Activated T-helper 2 cell treated with anti-CD3 and anti-CD28 coated beads, Interferon-gamma antibody, Interleukin-2, Interleukin-4, amounts not matched to agents 10 μg/mL and 5 μg/mL and 100 μg/mL, durations not matched to agents 14 hours and 24 hours and 36 hours (primary cell): ENCODE measurements at regions of chr4 and their contacts with region 1.

Region 1: GRCh38 chr4:153573881-153574802 is 108.0 kb downstream of the TMEM131L start:
- DNase-seq: peak; percentile 55
- H3K4me3 Mint-ChIP-seq: no peak overlapping the region
- H3K27ac Mint-ChIP-seq: peak overlapping the region; percentile 20
- H3K4me1 Mint-ChIP-seq: peaks cover 57% of the 10 kb centered on the region
- H3K27me3 Mint-ChIP-seq: no peaks in the 10 kb centered on the region

Region 2: DNA sequence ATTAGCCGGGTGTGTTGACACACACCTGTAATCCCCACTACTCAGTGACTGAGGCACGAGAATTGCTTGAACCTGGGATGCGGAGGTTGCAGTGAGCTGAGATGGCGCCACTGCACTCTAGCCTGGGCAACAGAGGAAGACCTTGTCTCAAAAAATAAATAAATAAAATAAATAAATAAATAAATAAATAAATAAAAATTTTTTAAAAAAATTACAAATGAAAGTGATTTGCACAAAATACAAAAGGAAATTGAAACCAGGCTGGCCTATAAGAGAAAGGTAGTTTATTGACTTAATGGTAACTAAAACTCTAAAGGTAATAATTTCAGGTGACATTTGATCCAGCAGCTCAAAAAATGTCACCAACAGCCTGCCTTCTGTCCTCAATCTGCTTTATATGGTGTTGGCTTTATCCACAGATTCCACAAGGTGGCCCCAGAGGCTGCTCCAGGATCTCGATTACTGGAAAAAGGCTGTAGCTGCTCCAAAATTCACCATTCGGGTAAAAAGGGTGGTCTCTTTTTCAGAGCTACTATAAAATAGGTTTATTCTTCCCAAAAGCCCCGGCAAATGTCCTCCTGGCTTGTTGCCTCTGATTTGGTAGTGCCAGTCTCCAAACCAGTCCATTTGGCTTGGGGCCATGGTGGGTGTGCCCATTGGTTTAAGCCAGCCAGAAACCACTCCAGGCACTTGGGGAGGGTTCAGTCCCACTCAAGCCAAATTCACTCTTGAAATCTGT is 431.3 kb before region 1 on chr4:
- intact Hi-C with region 1: loop called (anchors 1 kb)
- DNase-seq: no peak
- H3K4me3 Mint-ChIP-seq: no peak overlapping the region
- H3K27ac Mint-ChIP-seq: no peak overlapping the region
- H3K4me1 Mint-ChIP-seq: peaks cover 5% of the 10 kb centered on the region
- H3K27me3 Mint-ChIP-seq: peaks cover 26% of the 10 kb centered on the region

Region 3: GRCh38 chr4:153344131-153345010 is 229.8 kb before region 1 on chr4 and contains the start of gene MND1:
- intact Hi-C with region 1: loop called (anchors 1 kb)
- DNase-seq: peak; percentile 91
- H3K4me3 Mint-ChIP-seq: peak within 1 kb of the TSS; percentile 93
- H3K27ac Mint-ChIP-seq: peak within 1 kb of the TSS; percentile 87
- H3K4me1 Mint-ChIP-seq: peaks cover 40% of the 10 kb centered on the region
- H3K27me3 Mint-ChIP-seq: peaks cover 17% of the 10 kb centered on the region
- total RNA-seq, gene MND1: 15.4 and 17.8 TPM in 2 replicates

Region 4: GRCh38 chr4:153432968-153433753 is 141.0 kb before region 1 on chr4:
- intact Hi-C with region 1: loop called (anchors 1 kb)
- DNase-seq: peak; percentile 76
- H3K4me3 Mint-ChIP-seq: peak overlapping the region; percentile 73
- H3K27ac Mint-ChIP-seq: peak overlapping the region; percentile 94
- H3K4me1 Mint-ChIP-seq: peaks cover 51% of the 10 kb centered on the region
- H3K27me3 Mint-ChIP-seq: no peaks in the 10 kb centered on the region

Region 5: DNA sequence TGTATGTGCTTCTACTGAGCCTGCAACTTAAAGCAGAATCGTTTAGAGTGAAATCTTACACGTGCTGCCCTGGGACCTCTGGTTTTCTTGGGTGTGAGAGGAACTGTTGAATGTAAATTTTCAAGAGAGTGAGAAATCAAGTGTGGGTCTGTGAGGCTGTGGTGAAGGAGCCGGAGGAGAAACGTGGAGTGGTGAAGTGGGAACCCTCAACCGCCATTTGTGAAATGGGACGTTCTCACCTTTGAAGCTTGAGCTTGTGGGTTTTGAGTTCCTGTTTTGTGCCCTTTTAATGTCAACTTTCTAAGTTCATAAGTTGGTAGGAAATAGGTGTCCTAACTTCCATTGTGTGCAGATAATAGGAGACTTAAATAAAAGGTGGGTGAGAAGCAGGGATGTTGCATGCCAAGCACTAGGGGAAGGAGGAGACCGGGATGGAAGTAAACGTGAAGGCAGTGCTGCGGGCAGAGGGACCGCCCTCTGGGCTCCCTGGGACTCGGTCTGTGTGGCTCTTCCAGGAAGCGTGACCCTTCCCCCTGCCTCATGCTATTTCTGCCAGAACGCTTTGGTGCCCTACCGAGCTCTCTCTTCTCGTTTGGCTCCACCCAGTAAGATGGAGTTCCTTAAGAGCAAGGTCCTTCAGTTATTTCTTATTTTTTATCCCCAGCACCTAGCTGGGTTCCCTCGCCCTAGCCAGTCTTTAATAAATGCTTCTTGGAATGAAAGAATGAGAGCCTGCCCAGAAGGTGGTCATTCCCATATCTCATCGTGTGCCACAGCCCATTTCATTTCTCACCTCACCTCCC is 51.9 kb before region 1 on chr4:
- intact Hi-C with region 1: loop called (anchors 1 kb)
- DNase-seq: peak; percentile 60
- H3K4me3 Mint-ChIP-seq: peak overlapping the region; percentile 71
- H3K27ac Mint-ChIP-seq: peak overlapping the region; percentile 98
- H3K4me1 Mint-ChIP-seq: peaks cover 87% of the 10 kb centered on the region
- H3K27me3 Mint-ChIP-seq: no peaks in the 10 kb centered on the region